ENCODE measurements at regions of chr5 and their contacts with region 1.

Region 1: DNA sequence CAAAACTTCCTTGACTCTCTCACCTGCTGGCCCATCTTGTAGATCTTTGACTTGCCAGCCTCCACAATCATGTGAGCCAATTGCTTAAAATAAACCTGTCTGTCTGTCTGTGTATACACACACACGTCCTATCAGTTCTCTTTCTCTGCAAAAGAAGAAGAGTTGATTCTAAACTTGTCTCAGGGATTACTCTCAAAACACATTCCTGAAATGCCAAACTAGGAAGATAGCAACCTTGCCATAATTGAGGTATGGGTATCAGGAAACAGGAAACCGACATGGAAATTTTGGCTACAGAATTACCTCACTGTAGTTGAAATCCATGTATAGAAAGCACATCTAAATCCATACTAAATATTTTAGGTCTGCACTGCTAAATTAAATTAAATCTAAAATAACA is 483.4 kb downstream of the PLK2 start:
- DNase-seq: no peak
- H3K4me3 ChIP-seq: no peak overlapping the region
- H3K27ac ChIP-seq: no peak overlapping the region
- H3K4me1 ChIP-seq: no peaks in the 10 kb centered on the region
- H3K27me3 ChIP-seq: no peaks in the 10 kb centered on the region
- CTCF ChIP-seq: no peak

Region 2: GRCh38 chr5:57900381-57900944 is 76.0 kb before region 1 on chr5:
- CTCF ChIA-PET with region 1: no interaction called
- POLR2A ChIA-PET with region 1: interaction called, 10 read pairs
- intact Hi-C with region 1: no loop called
- DNase-seq: peak in 1 of 2 experiments; percentile 47
- H3K4me3 ChIP-seq: no peak overlapping the region
- H3K27ac ChIP-seq: 0 out of 2 replicates have a peak overlapping the region, but pooled peaks have one; percentile 13
- H3K4me1 ChIP-seq: 0 out of 2 replicates have a peak, but pooled peaks cover 6% of the 10 kb centered on the region
- H3K27me3 ChIP-seq: no peaks in the 10 kb centered on the region
- CTCF ChIP-seq: no peak

Region 3: GRCh38 chr5:57956636-57957035 is 19.9 kb before region 1 on chr5:
- CTCF ChIA-PET with region 1: no interaction called
- POLR2A ChIA-PET with region 1: no interaction called
- intact Hi-C with region 1: no loop called
- DNase-seq: no peak
- H3K4me3 ChIP-seq: no peak overlapping the region
- H3K27ac ChIP-seq: no peak overlapping the region
- H3K4me1 ChIP-seq: no peaks in the 10 kb centered on the region
- H3K27me3 ChIP-seq: no peaks in the 10 kb centered on the region
- CTCF ChIP-seq: no peak

Region 4: GRCh38 chr5:58025809-58026208 is 49.3 kb after region 1 on chr5:
- CTCF ChIA-PET with region 1: no interaction called
- POLR2A ChIA-PET with region 1: no interaction called
- intact Hi-C with region 1: no loop called
- DNase-seq: no peak
- H3K4me3 ChIP-seq: no peak overlapping the region
- H3K27ac ChIP-seq: no peak overlapping the region
- H3K4me1 ChIP-seq: peaks cover 18% of the 10 kb centered on the region
- H3K27me3 ChIP-seq: no peaks in the 10 kb centered on the region
- CTCF ChIP-seq: no peak

Measured in PC-9 (cell line).